Activated B cell treated with CpG ODN at 0.5 μM for 24 hours (primary cell): ENCODE measurements at regions of chr12 and their contacts with region 1.

Region 1: DNA sequence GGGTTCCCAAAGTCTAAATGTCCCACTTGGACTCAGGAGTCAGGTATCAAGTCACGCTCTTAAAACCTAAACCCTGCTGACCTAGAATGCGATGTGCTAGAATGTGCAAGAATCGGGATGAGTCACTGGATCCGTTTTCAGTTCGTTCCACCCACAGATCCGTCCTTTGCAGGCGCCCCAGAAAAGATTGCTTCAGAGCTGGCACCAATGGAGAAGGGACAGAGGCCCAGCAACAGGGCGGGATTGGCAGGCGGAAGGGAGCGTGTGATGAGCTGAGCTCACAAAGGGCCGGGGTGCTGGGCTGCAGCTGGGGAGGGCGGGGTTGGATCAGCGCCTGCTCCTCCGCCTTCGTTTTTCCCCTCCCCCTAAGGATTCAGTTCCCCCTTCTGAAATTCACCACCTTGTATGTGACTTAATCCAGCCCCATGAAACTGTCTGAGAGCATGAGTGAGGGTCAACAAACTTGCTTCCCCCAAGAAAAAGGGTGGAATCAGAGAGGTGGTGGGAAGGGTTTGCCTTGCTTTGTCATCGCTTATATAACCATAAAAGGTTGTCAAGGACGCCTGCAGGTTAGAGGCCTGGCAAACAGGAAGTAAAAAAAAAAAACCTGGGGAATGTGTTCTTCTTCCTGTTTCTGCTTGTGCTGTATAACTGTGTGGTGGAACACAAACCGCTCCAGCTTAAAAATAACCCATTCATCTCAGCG is 2.8 kb upstream of the UBC start:
- DNase-seq: peak; percentile 77
- ATAC-seq: peak; percentile 63
- H3K4me3 Mint-ChIP-seq: peak overlapping the region; percentile 100
- H3K27ac Mint-ChIP-seq: peak overlapping the region; percentile 100
- H3K4me1 Mint-ChIP-seq: peaks cover 91% of the 10 kb centered on the region
- H3K27me3 Mint-ChIP-seq: no peaks in the 10 kb centered on the region
- CTCF ChIP-seq: no peak

Region 2: GRCh38 chr12:124927201-124928094 is 10.2 kb after region 1 on chr12:
- CTCF ChIA-PET with region 1: interaction called, 19 read pairs
- POLR2A ChIA-PET with region 1: interaction called, 590 read pairs
- intact Hi-C with region 1: loop called (anchors 1 kb)
- DNase-seq: peak; percentile 91
- ATAC-seq: peak; percentile 84
- H3K4me3 Mint-ChIP-seq: peak overlapping the region; percentile 88
- H3K27ac Mint-ChIP-seq: peak overlapping the region; percentile 98
- H3K4me1 Mint-ChIP-seq: peaks cover 32% of the 10 kb centered on the region
- H3K27me3 Mint-ChIP-seq: peaks cover 6% of the 10 kb centered on the region
- CTCF ChIP-seq: no peak